Activated CD4-positive, alpha-beta memory T cell treated with anti-CD3 and anti-CD28 coated beads for 36 hours (primary cell): ENCODE measurements at regions of chr6 and their contacts with region 1.

Region 1: DNA sequence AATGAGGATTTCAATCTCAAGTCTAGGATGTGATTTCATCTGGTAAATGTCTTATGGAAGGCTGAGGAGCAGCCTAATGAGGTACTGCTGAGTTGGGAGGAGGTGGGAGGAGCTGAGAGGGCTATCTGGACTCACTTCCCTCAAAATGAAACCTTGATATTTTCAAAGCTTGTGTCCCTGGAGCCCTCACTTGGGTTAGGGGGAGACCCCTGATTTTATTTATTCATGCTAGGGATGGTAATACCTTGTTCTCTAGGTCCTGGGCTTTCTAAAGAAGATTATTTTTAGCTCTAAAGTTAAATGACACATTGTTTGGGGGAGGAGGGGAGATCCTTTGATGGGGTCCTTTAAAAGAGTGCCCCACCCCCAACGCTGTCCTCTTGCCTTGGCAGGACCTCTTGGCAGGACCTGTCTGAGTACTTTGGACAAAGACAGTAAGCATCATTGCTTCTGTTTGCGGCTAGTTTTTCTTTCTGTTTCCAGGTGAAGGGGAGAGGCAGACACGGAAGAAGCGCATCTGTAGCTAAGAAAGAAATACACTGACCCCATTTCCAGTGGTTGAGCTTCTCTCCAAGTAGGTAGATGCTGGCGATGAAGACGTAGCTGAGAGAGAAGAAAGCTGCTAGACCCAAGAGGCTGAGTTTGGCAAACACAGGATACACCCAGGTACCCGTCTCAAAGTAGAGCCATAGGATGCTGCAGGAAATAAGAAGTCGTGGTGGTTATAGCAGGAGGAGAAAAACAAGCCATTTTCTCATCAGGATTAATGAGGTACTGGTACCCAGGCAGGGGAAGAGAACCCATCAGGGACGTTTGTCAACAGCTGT is 55.6 kb downstream of the ADTRP start:
- DNase-seq: no peak
- H3K4me3 Mint-ChIP-seq: peak overlapping the region; percentile 69
- H3K27ac Mint-ChIP-seq: peak overlapping the region; percentile 87
- H3K4me1 Mint-ChIP-seq: peaks cover 56% of the 10 kb centered on the region
- H3K27me3 Mint-ChIP-seq: no peaks in the 10 kb centered on the region

Region 2: GRCh38 chr6:11650011-11650696 is 72.9 kb before region 1 on chr6:
- CTCF ChIA-PET with region 1: no interaction called
- POLR2A ChIA-PET with region 1: no interaction called
- intact Hi-C with region 1: no loop called
- DNase-seq: no peak
- H3K4me3 Mint-ChIP-seq: no peak overlapping the region
- H3K27ac Mint-ChIP-seq: no peak overlapping the region
- H3K4me1 Mint-ChIP-seq: peaks cover 10% of the 10 kb centered on the region
- H3K27me3 Mint-ChIP-seq: peaks cover 8% of the 10 kb centered on the region

Region 3: DNA sequence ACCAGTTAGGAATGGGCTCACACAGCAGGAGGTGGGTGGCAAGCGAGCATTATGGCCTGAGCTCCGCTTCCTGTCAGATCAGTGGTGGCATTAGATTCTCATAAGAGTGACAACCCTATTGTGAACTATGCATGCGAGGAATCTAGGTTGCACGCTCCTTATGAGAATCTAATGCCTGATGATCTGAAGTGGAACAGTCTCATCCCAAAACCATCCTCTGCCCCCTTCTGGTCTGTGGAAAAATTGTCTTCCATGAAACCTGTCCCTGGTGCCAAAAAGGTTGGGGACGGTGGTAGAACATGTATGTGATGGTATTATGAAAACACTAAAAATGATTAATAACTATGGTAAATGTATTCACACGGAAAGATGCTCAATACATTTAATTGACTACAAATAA is 189.4 kb after region 1 on chr6:
- CTCF ChIA-PET with region 1: no interaction called
- POLR2A ChIA-PET with region 1: no interaction called
- intact Hi-C with region 1: loop called (anchors 1 kb)
- DNase-seq: no peak
- H3K4me3 Mint-ChIP-seq: no peak overlapping the region
- H3K27ac Mint-ChIP-seq: no peak overlapping the region
- H3K4me1 Mint-ChIP-seq: no peaks in the 10 kb centered on the region
- H3K27me3 Mint-ChIP-seq: no peaks in the 10 kb centered on the region